HepG2 (cell line): ENCODE measurements at regions of chr11 and their contacts with region 1.

Region 1: DNA sequence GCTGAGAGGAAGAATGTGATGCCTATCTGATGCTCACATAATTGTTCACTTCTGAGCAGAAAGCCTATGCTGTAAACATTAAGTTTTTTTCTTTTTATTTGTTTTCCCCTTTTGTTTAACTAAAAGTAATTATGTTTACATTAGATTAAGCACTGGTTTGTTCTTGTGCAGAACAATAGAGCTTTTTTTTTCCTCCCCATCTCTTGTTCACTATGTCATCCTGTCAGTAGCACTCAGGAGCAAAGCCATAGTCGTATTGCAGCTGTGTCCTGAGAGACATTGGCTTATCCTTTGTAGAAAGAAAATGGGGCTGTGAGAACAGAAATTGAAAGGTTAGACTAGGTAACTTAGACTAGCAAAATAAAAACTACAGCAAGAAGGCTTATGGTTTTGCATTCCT is 301.8 kb upstream of the RAG2 start:
- DNase-seq: no peak
- ATAC-seq: no peak
- H3K4me3 ChIP-seq: no peak overlapping the region
- H3K27ac ChIP-seq: no peak overlapping the region
- H3K4me1 ChIP-seq: no peaks in the 10 kb centered on the region
- H3K27me3 ChIP-seq: no peaks in the 10 kb centered on the region; a peak in 1 of 5 replicates
- CTCF ChIP-seq: no peak
- EP300 ChIP-seq: no peak
- POLR2A ChIP-seq: no peak
- RAD21 ChIP-seq: no peak

Region 2: GRCh38 chr11:37002831-37003230 is 103.0 kb after region 1 on chr11:
- CTCF ChIA-PET with region 1: no interaction called
- POLR2A ChIA-PET with region 1: no interaction called
- in situ Hi-C with region 1: loop called (anchors 25 kb)
- intact Hi-C with region 1: no loop called
- DNase-seq: no peak
- ATAC-seq: no peak
- H3K4me3 ChIP-seq: no peak overlapping the region
- H3K27ac ChIP-seq: no peak overlapping the region
- H3K4me1 ChIP-seq: no peaks in the 10 kb centered on the region
- H3K27me3 ChIP-seq: no peaks in the 10 kb centered on the region
- CTCF ChIP-seq: no peak
- EP300 ChIP-seq: no peak
- POLR2A ChIP-seq: no peak
- RAD21 ChIP-seq: no peak